B cell (primary cell): ENCODE measurements at regions of chr15 and their contacts with region 1.

Region 1: DNA sequence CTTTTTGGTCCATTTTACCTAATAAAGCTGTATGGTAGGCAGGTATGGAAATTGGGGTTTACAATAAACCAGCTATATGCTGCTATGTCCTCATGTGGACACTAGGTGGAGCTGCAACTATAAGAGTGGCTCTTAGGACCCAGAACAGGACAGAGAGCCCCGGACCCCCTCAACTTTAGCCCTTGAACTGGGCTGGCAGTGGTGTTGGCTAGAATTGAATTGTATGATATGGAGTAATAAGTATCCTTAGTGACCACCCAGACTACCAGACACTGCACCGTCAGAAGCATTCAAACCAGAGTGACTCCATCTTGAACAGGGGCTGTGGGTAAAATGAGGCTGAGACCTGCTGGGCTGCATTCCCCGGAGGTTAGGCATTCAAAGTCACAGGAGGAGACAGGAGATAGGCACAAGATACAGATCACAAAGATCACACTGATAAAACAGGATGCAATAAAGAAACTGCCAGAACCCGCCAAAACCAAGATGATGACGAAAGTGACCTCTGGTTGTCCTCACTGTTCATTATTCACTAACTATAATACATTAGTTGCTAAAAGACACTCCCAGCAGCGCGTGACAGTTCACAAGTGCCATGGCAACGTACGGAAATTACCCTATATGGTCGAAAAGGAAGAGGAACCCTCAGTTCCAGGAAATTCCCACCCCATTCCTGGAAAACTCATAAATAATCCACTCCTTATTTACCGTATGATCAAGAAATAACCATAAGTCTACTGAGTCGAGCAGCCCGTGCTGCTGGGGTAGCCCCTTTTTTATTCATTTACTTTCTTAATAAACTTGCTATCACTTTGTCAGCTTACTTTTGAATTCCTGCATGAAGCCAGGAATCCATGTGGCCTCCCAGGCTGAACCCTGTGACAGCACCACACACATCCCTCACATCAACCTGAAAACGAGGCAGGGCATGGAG is 68.7 kb upstream of the BLM start:
- DNase-seq: peak; percentile 81
- ATAC-seq: peak; percentile 92
- H3K4me3 ChIP-seq: no peak overlapping the region
- H3K4me3 Mint-ChIP-seq: peak overlapping the region; percentile 57
- H3K27ac ChIP-seq: no peak overlapping the region
- H3K27ac Mint-ChIP-seq: peak overlapping the region; percentile 34
- H3K4me1 ChIP-seq: peaks cover 7 to 8% of the 10 kb centered on the region in 2 donors
- H3K4me1 Mint-ChIP-seq: peaks cover 9% of the 10 kb centered on the region
- H3K27me3 ChIP-seq: peaks cover 0 to 14% (median 5%) of the 10 kb centered on the region in 4 experiments
- H3K27me3 Mint-ChIP-seq: peaks cover 8% of the 10 kb centered on the region
- CTCF ChIP-seq: peak; percentile 94

Region 2: GRCh38 chr15:89926158-89926557 is 722.2 kb before region 1 on chr15:
- CTCF ChIA-PET with region 1: no interaction called
- POLR2A ChIA-PET with region 1: no interaction called
- intact Hi-C with region 1: no loop called
- DNase-seq: no peak
- ATAC-seq: no peak
- H3K4me3 ChIP-seq: no peak overlapping the region
- H3K4me3 Mint-ChIP-seq: no peak overlapping the region
- H3K27ac ChIP-seq: no peak overlapping the region
- H3K27ac Mint-ChIP-seq: no peak overlapping the region
- H3K4me1 ChIP-seq: no peaks in the 10 kb centered on the region
- H3K4me1 Mint-ChIP-seq: no peaks in the 10 kb centered on the region
- H3K27me3 ChIP-seq: no peaks in the 10 kb centered on the region
- H3K27me3 Mint-ChIP-seq: no peaks in the 10 kb centered on the region
- CTCF ChIP-seq: no peak

Region 3: DNA sequence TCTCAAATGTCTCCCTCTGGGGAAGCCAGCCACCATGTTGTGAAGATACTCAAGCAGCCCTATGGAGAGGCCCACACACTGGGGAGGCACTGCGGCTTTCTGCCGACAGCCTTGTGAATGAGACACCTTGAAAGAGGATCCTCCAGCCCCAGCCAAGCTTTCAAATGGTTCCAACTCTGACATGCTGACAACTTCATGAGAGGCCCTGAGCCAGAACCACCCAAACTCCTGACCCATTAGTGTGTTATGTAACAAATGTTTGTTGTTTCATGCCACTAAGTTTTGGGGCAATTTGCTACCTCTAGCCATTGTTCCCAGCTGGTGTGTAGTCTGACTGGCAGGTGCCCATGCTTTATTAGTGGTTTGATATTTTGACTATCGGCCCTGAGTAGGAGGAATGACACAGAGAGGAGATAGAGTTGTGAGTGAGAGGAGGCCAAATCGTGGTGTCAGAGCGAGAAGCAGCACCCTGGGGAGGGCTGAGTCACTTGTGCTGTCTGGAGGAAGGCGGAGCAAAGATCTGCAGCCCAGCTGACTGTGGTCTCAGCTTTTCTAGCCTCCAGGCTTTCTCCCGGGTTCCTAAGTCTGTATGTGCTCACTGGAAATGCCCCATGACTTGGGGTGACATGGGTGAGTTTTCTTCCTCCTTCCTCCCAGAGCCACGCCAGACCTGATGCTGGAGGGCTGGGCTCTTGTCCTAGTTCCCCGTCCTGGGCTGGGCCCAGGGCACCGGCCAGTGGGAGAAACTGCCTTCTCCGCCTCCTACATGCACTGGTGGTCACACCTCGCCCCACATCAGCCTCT is 12.0 kb after region 1 on chr15:
- CTCF ChIA-PET with region 1: interaction called, 15 read pairs
- POLR2A ChIA-PET with region 1: no interaction called
- intact Hi-C with region 1: no loop called
- DNase-seq: peak; percentile 58
- ATAC-seq: peak; percentile 82
- H3K4me3 ChIP-seq: peak overlapping the region; percentile 7 to 55 (median 30)
- H3K4me3 Mint-ChIP-seq: peak overlapping the region; percentile 66
- H3K27ac ChIP-seq: no peak overlapping the region
- H3K27ac Mint-ChIP-seq: peak overlapping the region; percentile 43
- H3K4me1 ChIP-seq: peaks cover 80 to 88% of the 10 kb centered on the region in 2 donors
- H3K4me1 Mint-ChIP-seq: peaks cover 76% of the 10 kb centered on the region
- H3K27me3 ChIP-seq: peaks cover 0 to 49% (median 29%) of the 10 kb centered on the region in 4 experiments
- H3K27me3 Mint-ChIP-seq: peaks cover 39% of the 10 kb centered on the region
- CTCF ChIP-seq: no peak

Region 4: GRCh38 chr15:90665288-90666134 is 17.1 kb after region 1 on chr15:
- CTCF ChIA-PET with region 1: interaction called, 15 read pairs
- POLR2A ChIA-PET with region 1: no interaction called
- intact Hi-C with region 1: no loop called
- DNase-seq: peak; percentile 83
- ATAC-seq: peak; percentile 73
- H3K4me3 ChIP-seq: peak overlapping the region in 4 of 5 experiments; percentile 50 to 82 (median 62)
- H3K4me3 Mint-ChIP-seq: peak overlapping the region; percentile 89
- H3K27ac ChIP-seq: peak overlapping the region; percentile 20 to 57
- H3K27ac Mint-ChIP-seq: peak overlapping the region; percentile 78
- H3K4me1 ChIP-seq: peaks cover 54 to 65% of the 10 kb centered on the region in 2 donors
- H3K4me1 Mint-ChIP-seq: peaks cover 56% of the 10 kb centered on the region
- H3K27me3 ChIP-seq: peaks cover 0 to 17% (median 11%) of the 10 kb centered on the region in 4 experiments
- H3K27me3 Mint-ChIP-seq: peaks cover 13% of the 10 kb centered on the region
- CTCF ChIP-seq: no peak

Region 5: DNA sequence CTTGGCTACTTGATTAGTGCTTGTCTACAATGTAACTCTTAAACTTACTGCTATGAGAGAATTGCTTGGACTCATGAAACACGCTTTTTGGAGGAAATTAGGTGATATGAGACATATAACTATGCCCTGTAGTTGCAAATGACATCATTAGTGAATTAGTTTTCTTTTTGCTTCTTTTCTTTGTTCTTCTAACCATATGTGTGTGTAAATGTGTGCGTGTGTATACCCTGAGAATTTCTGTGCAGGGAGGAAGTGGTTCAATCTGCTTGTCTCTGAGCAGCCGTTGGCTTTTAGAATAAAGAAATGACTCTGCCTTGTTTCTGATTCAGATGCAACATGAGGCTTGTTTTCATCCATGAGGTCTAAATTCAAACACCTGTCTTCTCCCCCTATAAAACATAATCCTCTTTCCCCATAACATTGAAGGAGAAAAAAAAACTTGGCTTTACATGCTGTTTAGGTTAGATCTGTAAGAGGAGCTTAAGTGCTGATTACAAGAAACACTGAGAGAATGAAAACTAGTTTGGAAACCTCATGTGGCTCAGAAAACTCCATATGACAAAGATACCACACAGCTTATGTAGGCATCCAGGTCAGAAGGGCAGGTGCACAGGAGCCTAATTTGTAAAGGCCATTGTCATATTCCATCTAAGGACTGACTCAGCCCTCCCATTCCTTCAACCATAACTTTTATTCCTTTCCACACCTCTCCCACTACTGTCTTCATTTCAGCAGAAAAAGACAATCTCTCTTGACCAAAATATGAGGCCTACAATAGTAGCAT is 38.2 kb after region 1 on chr15:
- CTCF ChIA-PET with region 1: interaction called, 119 read pairs
- POLR2A ChIA-PET with region 1: no interaction called
- intact Hi-C with region 1: no loop called
- DNase-seq: peak; percentile 25
- ATAC-seq: peak; percentile 56
- H3K4me3 ChIP-seq: no peak overlapping the region
- H3K4me3 Mint-ChIP-seq: peak overlapping the region; percentile 1
- H3K27ac ChIP-seq: no peak overlapping the region
- H3K27ac Mint-ChIP-seq: peak overlapping the region; percentile 15
- H3K4me1 ChIP-seq: peaks cover 18 to 23% of the 10 kb centered on the region in 2 donors
- H3K4me1 Mint-ChIP-seq: peaks cover 19% of the 10 kb centered on the region
- H3K27me3 ChIP-seq: peaks cover 0 to 6% (median 0%) of the 10 kb centered on the region in 4 experiments
- H3K27me3 Mint-ChIP-seq: peaks cover 4% of the 10 kb centered on the region
- CTCF ChIP-seq: no peak

Region 6: DNA sequence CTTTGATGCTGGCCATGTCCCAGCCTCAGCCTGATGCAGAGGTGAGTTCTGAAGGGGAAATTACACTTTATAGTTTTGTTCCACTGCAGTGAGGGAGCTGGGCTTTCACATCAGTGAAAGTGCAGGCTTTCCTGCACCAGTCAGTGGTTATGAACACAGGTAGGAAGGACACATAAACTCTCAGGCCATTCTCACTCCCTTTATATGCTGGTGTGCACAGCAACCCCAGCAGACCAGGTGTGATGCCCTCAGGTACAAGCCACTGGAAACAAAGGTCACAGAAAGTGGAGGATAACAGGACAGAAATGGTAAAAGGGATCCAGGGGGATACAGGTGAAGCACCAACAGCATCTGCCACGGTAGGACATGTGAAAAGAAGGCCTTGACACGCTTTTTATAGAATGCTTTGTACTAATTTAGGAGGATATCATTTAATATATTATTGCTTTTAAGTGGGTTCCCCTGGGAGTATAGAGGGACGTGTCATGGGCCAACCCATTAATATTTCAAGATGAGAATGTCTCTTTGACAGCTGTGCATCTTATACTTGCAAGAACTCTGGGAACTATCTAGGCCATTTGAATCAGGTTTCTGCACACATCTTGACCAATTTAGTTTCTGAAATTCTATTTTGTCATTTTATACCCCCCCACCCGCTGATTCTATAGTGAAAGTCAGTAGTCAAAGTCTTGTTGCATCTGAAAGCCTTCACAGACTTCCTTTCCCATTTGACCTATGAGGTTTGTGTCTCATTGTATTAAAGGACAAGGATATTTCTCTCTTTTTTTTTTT is 43.8 kb after region 1 on chr15:
- CTCF ChIA-PET with region 1: interaction called, 119 read pairs
- POLR2A ChIA-PET with region 1: no interaction called
- intact Hi-C with region 1: loop called (anchors 1 kb)
- DNase-seq: no peak
- ATAC-seq: no peak
- H3K4me3 ChIP-seq: no peak overlapping the region
- H3K4me3 Mint-ChIP-seq: no peak overlapping the region
- H3K27ac ChIP-seq: no peak overlapping the region
- H3K27ac Mint-ChIP-seq: peak overlapping the region; percentile 7
- H3K4me1 ChIP-seq: no peaks in the 10 kb centered on the region
- H3K4me1 Mint-ChIP-seq: no peaks in the 10 kb centered on the region
- H3K27me3 ChIP-seq: no peaks in the 10 kb centered on the region
- H3K27me3 Mint-ChIP-seq: no peaks in the 10 kb centered on the region
- CTCF ChIP-seq: no peak

Region 7: GRCh38 chr15:90895336-90896117 is 247.1 kb after region 1 on chr15:
- CTCF ChIA-PET with region 1: interaction called, 26 read pairs
- POLR2A ChIA-PET with region 1: no interaction called
- intact Hi-C with region 1: no loop called
- DNase-seq: no peak
- ATAC-seq: no peak
- H3K4me3 ChIP-seq: no peak overlapping the region
- H3K4me3 Mint-ChIP-seq: no peak overlapping the region
- H3K27ac ChIP-seq: no peak overlapping the region
- H3K27ac Mint-ChIP-seq: peak overlapping the region; percentile 54
- H3K4me1 ChIP-seq: peaks cover 16 to 20% of the 10 kb centered on the region in 2 donors
- H3K4me1 Mint-ChIP-seq: peaks cover 22% of the 10 kb centered on the region
- H3K27me3 ChIP-seq: no peaks in the 10 kb centered on the region
- H3K27me3 Mint-ChIP-seq: no peaks in the 10 kb centered on the region
- CTCF ChIP-seq: no peak